PC-3 (cell line): ENCODE measurements at regions of chr6 and their contacts with region 1.

Region 1: GRCh38 chr6:165484178-165484889 is 174.9 kb upstream of the C6orf118 start:
- DNase-seq: no peak
- ATAC-seq: no peak
- H3K4me3 ChIP-seq: no peak overlapping the region
- H3K27ac ChIP-seq: no peak overlapping the region
- H3K4me1 ChIP-seq: peaks cover 13% of the 10 kb centered on the region
- H3K27me3 ChIP-seq: no peaks in the 10 kb centered on the region
- CTCF ChIP-seq: no peak

Region 2: GRCh38 chr6:165218829-165219228 is 265.5 kb before region 1 on chr6:
- CTCF ChIA-PET with region 1: no interaction called
- POLR2A ChIA-PET with region 1: no interaction called
- intact Hi-C with region 1: no loop called
- DNase-seq: peak; percentile 79
- ATAC-seq: peak; percentile 37
- H3K4me3 ChIP-seq: no peak overlapping the region
- H3K27ac ChIP-seq: no peak overlapping the region
- H3K4me1 ChIP-seq: peaks cover 3% of the 10 kb centered on the region
- H3K27me3 ChIP-seq: no peaks in the 10 kb centered on the region
- CTCF ChIP-seq: no peak

Region 3: DNA sequence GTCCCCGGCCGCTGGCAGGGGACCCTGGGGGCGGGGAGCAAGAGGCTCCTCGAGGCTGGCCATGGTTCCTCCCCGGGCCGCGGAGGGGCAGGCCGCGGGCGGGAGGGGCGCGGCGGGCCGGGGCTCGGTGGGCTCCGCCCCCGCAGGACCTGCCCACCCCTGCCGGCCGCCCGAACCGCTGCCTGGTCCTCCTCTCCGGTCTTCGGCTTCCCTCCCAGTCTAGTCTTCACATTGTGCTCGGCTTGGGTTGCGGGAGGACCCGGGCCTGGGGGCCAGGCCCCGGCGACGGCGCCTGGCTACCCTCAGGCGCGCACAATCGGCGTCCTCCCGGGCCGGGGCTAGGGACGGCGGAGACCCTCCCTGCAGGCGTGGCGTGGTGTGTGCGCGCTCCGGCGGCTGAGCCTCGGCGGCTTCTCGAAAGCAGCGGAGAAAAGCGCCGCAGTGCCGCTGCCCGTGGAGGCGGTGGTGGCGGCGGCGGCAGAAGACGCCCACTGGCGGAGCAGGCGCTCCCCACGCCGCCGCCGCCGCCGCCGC is 178.5 kb after region 1 on chr6 and contains the start of gene PDE10A:
- CTCF ChIA-PET with region 1: no interaction called
- POLR2A ChIA-PET with region 1: no interaction called
- intact Hi-C with region 1: loop called (anchors 5 kb)
- DNase-seq: no peak
- ATAC-seq: peak; percentile 49
- H3K4me3 ChIP-seq: peak within 1 kb of the TSS; percentile 58
- H3K27ac ChIP-seq: no peak within 1 kb of the TSS
- H3K4me1 ChIP-seq: peaks cover 4% of the 10 kb centered on the region; the same call in 1 of the 2 replicates
- H3K27me3 ChIP-seq: peaks cover 63% of the 10 kb centered on the region
- CTCF ChIP-seq: no peak
- total RNA-seq, gene PDE10A: 0.92 and 2.1 TPM in 2 replicates